Activated naive CD8-positive, alpha-beta T cell treated with anti-CD3 and anti-CD28 coated beads, Interleukin-2, amount 10 ng/mL, durations not matched to agents 7 days and 5 days (primary cell): ENCODE measurements at regions of chr17 and their contacts with region 1.

Region 1: DNA sequence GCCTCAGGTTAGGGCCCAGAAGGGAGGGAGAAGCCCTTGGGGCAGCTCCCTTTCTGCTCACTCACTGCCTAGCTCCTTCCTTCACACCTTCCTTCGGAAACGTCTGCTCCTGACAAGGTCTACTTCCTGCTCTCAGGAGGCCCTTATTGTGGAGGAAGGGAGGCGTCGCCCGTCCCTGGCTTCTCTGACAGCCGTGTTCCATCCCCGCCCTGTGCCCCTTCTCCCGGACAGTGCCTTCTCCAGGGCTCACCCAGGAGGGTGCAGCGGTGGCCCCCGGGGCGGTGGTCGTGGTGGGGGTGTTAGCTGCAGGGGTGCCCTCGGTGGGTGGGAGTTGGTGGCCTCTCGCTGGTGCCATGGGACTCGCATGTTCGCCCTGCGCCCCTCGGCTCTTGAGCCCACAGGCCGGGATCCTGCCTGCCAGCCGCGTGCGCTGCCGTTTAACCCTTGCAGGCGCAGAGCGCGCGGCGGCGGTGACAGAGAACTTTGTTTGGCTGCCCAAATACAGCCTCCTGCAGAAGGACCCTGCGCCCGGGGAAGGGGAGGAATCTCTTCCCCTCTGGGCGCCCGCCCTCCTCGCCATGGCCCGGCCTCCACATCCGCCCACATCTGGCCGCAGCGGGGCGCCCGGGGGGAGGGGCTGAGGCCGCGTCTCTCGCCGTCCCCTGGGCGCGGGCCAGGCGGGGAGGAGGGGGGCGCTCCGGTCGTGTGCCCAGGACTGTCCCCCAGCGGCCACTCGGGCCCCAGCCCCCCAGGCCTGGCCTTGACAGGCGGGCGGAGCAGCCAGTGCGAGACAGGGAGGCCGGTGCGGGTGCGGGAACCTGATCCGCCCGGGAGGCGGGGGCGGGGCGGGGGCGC is 231.9 kb downstream of the SEC14L1 start:
- DNase-seq: peak; percentile 89
- ATAC-seq: peak; percentile 43
- H3K4me3 Mint-ChIP-seq: peak overlapping the region; percentile 78
- H3K27ac Mint-ChIP-seq: peak overlapping the region; percentile 89
- H3K4me1 Mint-ChIP-seq: peaks cover 45% of the 10 kb centered on the region
- H3K27me3 Mint-ChIP-seq: no peaks in the 10 kb centered on the region

Region 2: DNA sequence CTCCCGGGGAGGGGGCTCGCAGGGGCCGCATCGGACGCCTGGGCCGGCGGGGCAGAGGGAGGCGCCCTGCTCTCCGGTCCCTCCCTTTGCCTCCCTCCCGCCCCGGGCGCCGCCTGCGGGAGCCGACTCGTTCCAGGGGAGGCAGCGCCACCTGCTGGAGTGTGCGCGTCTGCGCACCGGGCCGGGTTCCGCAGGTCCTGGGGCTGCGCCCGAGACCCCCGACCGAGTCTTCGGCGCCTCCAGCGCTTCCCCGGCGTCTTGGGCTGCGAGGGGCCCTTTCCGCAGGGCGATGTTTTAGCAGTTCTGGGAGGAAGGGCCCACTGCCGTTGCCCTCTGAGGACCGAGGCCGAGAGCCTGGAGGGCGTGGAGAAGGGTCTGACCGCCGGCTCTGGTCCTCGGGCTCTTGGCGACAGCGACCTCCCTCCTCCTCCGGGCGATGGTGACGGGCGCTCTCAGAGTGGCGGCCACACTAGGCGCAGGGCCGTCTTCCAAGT is 125.6 kb before region 1 on chr17:
- POLR2A ChIA-PET with region 1: no interaction called
- DNase-seq: peak; percentile 97
- ATAC-seq: peak; percentile 94
- H3K4me3 Mint-ChIP-seq: peak overlapping the region; percentile 66
- H3K27ac Mint-ChIP-seq: peak overlapping the region; percentile 60
- H3K4me1 Mint-ChIP-seq: peaks cover 22% of the 10 kb centered on the region
- H3K27me3 Mint-ChIP-seq: peaks cover 14% of the 10 kb centered on the region

Region 3: DNA sequence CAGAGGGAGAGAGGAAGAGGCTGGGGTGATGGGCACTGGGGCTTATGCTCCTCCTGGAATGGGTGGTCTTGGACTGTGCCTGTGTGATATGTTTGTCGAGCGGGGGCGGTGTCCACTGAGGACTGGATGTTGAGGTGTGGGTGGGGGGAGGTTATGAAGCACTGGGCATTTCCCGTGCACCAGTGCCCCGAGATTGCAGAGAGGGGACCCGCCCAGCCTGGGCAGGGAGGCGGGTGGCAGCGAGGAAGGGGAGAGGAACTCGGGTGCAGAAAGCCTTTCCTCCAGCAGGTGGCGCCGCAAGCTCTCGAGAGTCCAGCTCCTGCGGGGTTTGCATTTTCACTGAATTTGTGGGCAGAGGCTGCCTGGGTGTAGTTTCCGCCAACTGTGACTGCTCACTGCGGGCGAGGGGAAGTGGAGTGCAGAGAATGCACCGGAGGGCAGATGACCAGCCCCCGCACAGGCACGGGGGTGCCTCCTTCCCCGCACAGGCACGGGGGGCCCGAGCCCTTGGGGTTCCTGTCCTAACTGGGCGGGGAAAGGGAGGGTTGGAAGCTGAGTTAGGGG is 41.3 kb before region 1 on chr17:
- POLR2A ChIA-PET with region 1: interaction called, 35 read pairs
- DNase-seq: peak; percentile 96
- ATAC-seq: peak; percentile 92
- H3K4me3 Mint-ChIP-seq: peak overlapping the region; percentile 86
- H3K27ac Mint-ChIP-seq: peak overlapping the region; percentile 95
- H3K4me1 Mint-ChIP-seq: peaks cover 36% of the 10 kb centered on the region
- H3K27me3 Mint-ChIP-seq: no peaks in the 10 kb centered on the region

Region 4: DNA sequence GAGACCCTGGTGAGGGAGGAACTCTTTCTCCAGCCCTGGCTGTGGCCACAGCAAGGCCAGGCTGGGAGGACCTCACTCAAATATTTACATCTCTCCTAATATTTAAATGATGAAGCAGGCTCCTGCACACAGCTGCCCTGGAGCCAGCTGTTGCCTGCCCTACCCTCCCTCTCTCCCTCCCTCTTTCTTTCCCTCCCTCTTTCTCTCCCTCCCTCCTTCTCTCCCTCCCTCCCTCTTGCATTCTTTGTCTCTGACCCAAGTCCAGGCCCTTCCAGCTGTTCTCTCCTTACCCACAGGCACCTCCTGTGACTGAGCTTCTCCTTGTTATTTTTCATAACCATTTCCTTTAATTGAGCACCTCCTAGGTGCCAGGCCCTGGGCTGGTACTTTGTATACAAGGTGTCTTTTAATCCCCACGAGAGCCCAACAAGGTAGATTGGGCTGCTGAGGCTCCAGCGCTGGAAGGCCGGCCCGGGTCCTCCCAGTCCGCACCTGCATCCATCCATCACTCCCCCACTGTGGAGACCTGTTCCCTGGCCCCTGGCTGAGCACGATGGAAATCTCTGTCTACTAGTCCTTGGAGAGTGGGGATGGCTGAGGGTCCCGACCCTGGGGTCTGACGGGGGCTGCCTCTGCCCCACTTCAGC is 10.4 kb after region 1 on chr17:
- POLR2A ChIA-PET with region 1: interaction called, 84 read pairs
- DNase-seq: no peak
- ATAC-seq: peak; percentile 2
- H3K4me3 Mint-ChIP-seq: peak overlapping the region; percentile 69
- H3K27ac Mint-ChIP-seq: peak overlapping the region; percentile 90
- H3K4me1 Mint-ChIP-seq: peaks cover 60% of the 10 kb centered on the region
- H3K27me3 Mint-ChIP-seq: no peaks in the 10 kb centered on the region

Region 5: GRCh38 chr17:77404812-77405581 is 32.3 kb after region 1 on chr17:
- POLR2A ChIA-PET with region 1: interaction called, 26 read pairs
- DNase-seq: peak; percentile 81
- ATAC-seq: peak; percentile 74
- H3K4me3 Mint-ChIP-seq: peak overlapping the region; percentile 78
- H3K27ac Mint-ChIP-seq: peak overlapping the region; percentile 91
- H3K4me1 Mint-ChIP-seq: peaks cover 73% of the 10 kb centered on the region
- H3K27me3 Mint-ChIP-seq: no peaks in the 10 kb centered on the region

Region 6: GRCh38 chr17:77437017-77437416 is 64.3 kb after region 1 on chr17:
- POLR2A ChIA-PET with region 1: interaction called, 24 read pairs
- DNase-seq: no peak
- ATAC-seq: no peak
- H3K4me3 Mint-ChIP-seq: peak overlapping the region; percentile 93
- H3K27ac Mint-ChIP-seq: peak overlapping the region; percentile 93
- H3K4me1 Mint-ChIP-seq: peaks cover 72% of the 10 kb centered on the region
- H3K27me3 Mint-ChIP-seq: no peaks in the 10 kb centered on the region

Region 7: DNA sequence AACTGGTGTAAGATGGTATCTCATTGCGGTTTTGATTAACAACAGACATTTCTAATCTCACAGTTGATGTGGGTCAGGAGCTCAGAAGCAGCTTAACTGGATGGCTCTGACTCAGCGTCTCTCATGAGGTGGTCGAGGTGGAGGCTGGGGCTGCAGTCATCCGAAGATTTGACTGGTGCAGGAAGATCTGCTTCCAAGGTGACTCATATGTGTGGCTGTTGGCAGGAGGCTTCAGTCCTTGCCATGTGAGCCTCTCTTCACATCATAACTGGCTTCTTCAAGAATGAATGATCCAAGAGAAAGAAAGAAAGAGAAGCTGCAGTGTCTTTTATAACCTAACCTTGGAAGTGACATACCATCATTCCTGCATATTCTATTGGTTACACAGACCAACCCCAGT is 144.2 kb after region 1 on chr17:
- POLR2A ChIA-PET with region 1: no interaction called
- DNase-seq: peak; percentile 3
- ATAC-seq: no peak
- H3K4me3 Mint-ChIP-seq: no peak overlapping the region
- H3K27ac Mint-ChIP-seq: no peak overlapping the region
- H3K4me1 Mint-ChIP-seq: peaks cover 3% of the 10 kb centered on the region
- H3K27me3 Mint-ChIP-seq: peaks cover 12% of the 10 kb centered on the region